Activated T-helper 2 cell treated with anti-CD3 and anti-CD28 coated beads, Interferon-gamma antibody, Interleukin-2, Interleukin-4, amounts not matched to agents 10 μg/mL and 5 μg/mL and 100 μg/mL, durations not matched to agents 14 hours and 24 hours and 36 hours (primary cell): ENCODE measurements at regions of chr2 and their contacts with region 1.

Region 1: DNA sequence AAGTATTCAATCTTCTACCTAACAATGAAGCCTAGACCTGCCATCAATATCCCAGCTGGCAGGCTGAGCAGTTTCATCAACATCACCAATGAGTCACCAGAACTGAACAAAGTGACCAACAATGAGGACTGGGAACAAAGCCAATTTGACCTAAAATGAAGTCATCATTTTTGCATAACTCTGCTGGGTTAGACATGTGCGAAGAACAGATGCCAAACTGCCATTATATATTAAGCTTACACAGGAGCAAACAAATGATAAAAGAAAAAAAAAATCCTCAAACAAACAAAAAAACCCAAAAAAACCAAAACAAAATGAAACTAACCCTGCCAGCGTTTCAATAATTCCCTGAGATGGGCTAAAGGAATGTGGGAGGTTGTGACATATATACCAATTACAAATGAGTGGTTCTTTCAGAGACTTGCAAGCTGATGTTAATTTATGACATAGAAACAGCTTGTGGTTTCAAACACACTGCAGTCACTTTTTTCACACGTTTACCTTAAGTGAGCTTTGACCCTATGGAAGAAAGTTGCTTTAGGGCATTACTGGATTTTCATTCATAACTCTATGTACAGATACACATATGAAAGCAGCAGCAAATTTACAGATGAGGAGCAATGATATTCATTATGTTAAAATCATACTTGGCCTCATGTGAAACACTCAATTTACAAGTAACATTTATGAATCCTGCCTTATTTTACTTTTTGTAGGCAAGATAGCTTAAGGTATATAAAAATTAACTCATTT is 56.9 kb upstream of the CCDC141 start:
- DNase-seq: no peak
- H3K4me3 Mint-ChIP-seq: no peak overlapping the region
- H3K27ac Mint-ChIP-seq: peak overlapping the region; percentile 70
- H3K4me1 Mint-ChIP-seq: peaks cover 32% of the 10 kb centered on the region
- H3K27me3 Mint-ChIP-seq: no peaks in the 10 kb centered on the region

Region 2: GRCh38 chr2:179049546-179050311 is 57.1 kb before region 1 on chr2 and contains the start of gene CCDC141:
- intact Hi-C with region 1: loop called (anchors 5 kb)
- DNase-seq: peak; percentile 31
- H3K4me3 Mint-ChIP-seq: peak within 1 kb of the TSS; percentile 80
- H3K27ac Mint-ChIP-seq: peak within 1 kb of the TSS; percentile 81
- H3K4me1 Mint-ChIP-seq: peaks cover 50% of the 10 kb centered on the region
- H3K27me3 Mint-ChIP-seq: no peaks in the 10 kb centered on the region
- total RNA-seq, gene CCDC141: 3.6 and 4.2 TPM in 2 replicates

Region 3: GRCh38 chr2:179096090-179096489 is 10.8 kb before region 1 on chr2:
- intact Hi-C with region 1: loop called (anchors 1 kb)
- DNase-seq: no peak
- H3K4me3 Mint-ChIP-seq: no peak overlapping the region
- H3K27ac Mint-ChIP-seq: no peak overlapping the region
- H3K4me1 Mint-ChIP-seq: peaks cover 17% of the 10 kb centered on the region
- H3K27me3 Mint-ChIP-seq: no peaks in the 10 kb centered on the region

Region 4: DNA sequence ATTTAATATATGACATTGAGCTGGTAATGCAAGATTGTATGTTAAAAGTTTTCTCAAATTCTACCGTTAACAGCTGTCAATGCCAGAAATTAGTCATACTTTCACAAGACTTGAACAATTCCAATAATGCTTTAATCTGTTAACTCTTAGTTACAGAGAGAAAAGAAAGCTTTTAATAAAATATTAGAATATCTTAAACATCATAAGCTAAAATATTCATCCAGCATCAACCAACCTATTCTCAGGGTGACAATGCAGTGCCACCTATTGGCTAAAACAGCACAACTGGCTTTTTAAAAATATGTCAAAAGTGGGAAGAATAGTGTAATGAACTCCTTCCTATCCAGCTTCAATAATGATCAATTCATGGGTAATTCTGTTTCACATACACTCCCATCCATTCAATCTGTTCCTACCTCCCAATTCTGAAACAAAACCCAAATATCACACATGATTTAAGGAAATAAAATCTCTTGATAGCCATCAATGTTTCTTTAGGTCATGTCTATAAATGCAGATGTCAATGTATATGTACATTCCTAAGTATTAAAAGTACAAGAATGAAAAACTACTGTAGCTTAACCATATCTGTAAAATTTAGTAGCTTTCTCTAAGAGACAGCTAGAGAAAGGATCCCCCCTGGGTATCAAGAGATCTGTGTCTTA is 22.9 kb after region 1 on chr2:
- intact Hi-C with region 1: no loop called
- DNase-seq: no peak
- H3K4me3 Mint-ChIP-seq: no peak overlapping the region
- H3K27ac Mint-ChIP-seq: no peak overlapping the region
- H3K4me1 Mint-ChIP-seq: peaks cover 2% of the 10 kb centered on the region
- H3K27me3 Mint-ChIP-seq: no peaks in the 10 kb centered on the region